K562 (cell line): ENCODE measurements at regions of chr3 and their contacts with region 1.

Region 1: GRCh38 chr3:184469423-184469822 is 89.6 kb downstream of the CHRD start:
- DNase-seq: peak; percentile 48 to 59 (median 52)
- ATAC-seq: peak; percentile 84
- H3K4me3 ChIP-seq: no peak overlapping the region
- H3K27ac ChIP-seq: no peak overlapping the region
- H3K4me1 ChIP-seq: no peaks in the 10 kb centered on the region; a peak in 1 of 5 replicates
- H3K27me3 ChIP-seq: peaks cover 11 to 47% of the 10 kb centered on the region in 2 experiments; a peak in 4 of 5 replicates
- CTCF ChIP-seq: peak; percentile 76 to 80 (median 77)
- EP300 ChIP-seq: no peak
- POLR2A ChIP-seq: no peak
- RAD21 ChIP-seq: peak; percentile 42 to 78

Region 2: DNA sequence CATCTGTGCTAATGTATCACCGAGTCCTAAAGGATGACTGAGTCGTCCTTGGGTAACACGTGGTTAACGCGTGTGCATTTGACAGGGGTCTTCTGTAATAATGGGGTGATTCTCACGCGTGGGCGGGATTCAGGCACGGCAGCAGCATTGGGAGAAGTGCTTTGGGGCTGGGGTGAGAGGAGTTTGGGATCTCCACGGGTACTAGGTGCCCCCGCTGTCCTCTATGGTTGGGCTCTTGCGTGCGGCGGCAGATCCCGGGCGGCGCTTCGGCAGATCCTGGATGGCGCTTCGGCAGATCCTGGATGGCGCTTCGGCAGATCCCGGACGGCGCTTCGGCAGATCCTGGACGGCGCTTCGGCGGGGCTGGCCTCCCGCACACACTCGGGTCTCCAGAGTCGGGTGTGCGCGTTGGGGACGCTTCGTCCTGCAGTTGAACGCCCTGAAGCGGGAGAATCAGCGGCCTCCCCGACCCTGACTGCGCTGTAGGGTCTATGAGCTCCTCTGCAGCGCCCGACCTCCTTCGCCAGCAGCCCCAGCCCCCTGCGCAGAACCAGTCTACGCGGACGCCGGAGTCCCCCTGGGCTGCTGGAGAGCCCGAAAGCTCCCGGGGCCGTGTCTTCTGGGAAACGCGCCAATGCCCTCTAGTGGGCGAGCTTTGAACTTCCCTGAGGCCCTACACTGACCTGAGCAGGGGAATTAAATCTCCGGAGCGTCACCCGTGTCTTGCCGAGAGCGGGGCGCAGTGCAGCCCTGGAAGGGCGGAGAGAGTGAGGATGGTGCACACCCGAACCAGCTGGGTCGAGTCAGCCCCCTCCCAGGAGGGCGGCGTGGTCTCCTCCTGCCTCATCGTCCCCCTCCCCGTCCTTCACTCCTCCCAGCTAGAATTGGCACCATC is 44.1 kb after region 1 on chr3:
- CTCF ChIA-PET with region 1: no interaction called
- POLR2A ChIA-PET with region 1: interaction called, 4 read pairs
- in situ Hi-C with region 1: no loop called
- intact Hi-C with region 1: loop called (anchors 1 kb)
- DNase-seq: peak; percentile 78 to 87 (median 84)
- ATAC-seq: peak; percentile 100
- H3K4me3 ChIP-seq: no peak overlapping the region
- H3K27ac ChIP-seq: no peak overlapping the region
- H3K4me1 ChIP-seq: peaks cover 0 to 10% of the 10 kb centered on the region in 2 experiments; a peak in 2 of 5 replicates
- H3K27me3 ChIP-seq: peaks cover 10 to 35% of the 10 kb centered on the region in 2 experiments; a peak in 3 of 5 replicates
- CTCF ChIP-seq: peak; percentile 79 to 83 (median 82)
- EP300 ChIP-seq: no peak
- POLR2A ChIP-seq: no peak
- RAD21 ChIP-seq: peak; percentile 47 to 76

Region 3: GRCh38 chr3:184523825-184524615 is 54.6 kb after region 1 on chr3:
- CTCF ChIA-PET with region 1: no interaction called
- POLR2A ChIA-PET with region 1: no interaction called
- in situ Hi-C with region 1: no loop called
- intact Hi-C with region 1: no loop called
- DNase-seq: peak in 3 of 4 experiments; percentile 26 to 48 (median 40)
- ATAC-seq: peak; percentile 94
- H3K4me3 ChIP-seq: no peak overlapping the region
- H3K27ac ChIP-seq: no peak overlapping the region
- H3K4me1 ChIP-seq: peaks cover 0 to 11% of the 10 kb centered on the region in 2 experiments; a peak in 2 of 5 replicates
- H3K27me3 ChIP-seq: peaks cover 27 to 39% of the 10 kb centered on the region in 2 experiments
- CTCF ChIP-seq: no peak
- EP300 ChIP-seq: no peak
- POLR2A ChIP-seq: no peak
- RAD21 ChIP-seq: no peak

Region 4: GRCh38 chr3:184543843-184544512 is 74.6 kb after region 1 on chr3:
- CTCF ChIA-PET with region 1: interaction called, 12 read pairs
- POLR2A ChIA-PET with region 1: no interaction called
- in situ Hi-C with region 1: no loop called
- intact Hi-C with region 1: loop called (anchors 1 kb)
- DNase-seq: peak; percentile 66 to 82 (median 73)
- ATAC-seq: peak; percentile 84
- H3K4me3 ChIP-seq: no peak overlapping the region
- H3K27ac ChIP-seq: no peak overlapping the region
- H3K4me1 ChIP-seq: peaks cover 0 to 4% of the 10 kb centered on the region in 2 experiments; a peak in 1 of 5 replicates
- H3K27me3 ChIP-seq: peaks cover 16 to 50% of the 10 kb centered on the region in 2 experiments; a peak in 3 of 5 replicates
- CTCF ChIP-seq: peak; percentile 83 to 91 (median 85)
- EP300 ChIP-seq: no peak
- POLR2A ChIP-seq: no peak
- RAD21 ChIP-seq: peak; percentile 74 to 82